AG04449 (cell line): ENCODE measurements at regions of chr6 and their contacts with region 1.

Region 1: DNA sequence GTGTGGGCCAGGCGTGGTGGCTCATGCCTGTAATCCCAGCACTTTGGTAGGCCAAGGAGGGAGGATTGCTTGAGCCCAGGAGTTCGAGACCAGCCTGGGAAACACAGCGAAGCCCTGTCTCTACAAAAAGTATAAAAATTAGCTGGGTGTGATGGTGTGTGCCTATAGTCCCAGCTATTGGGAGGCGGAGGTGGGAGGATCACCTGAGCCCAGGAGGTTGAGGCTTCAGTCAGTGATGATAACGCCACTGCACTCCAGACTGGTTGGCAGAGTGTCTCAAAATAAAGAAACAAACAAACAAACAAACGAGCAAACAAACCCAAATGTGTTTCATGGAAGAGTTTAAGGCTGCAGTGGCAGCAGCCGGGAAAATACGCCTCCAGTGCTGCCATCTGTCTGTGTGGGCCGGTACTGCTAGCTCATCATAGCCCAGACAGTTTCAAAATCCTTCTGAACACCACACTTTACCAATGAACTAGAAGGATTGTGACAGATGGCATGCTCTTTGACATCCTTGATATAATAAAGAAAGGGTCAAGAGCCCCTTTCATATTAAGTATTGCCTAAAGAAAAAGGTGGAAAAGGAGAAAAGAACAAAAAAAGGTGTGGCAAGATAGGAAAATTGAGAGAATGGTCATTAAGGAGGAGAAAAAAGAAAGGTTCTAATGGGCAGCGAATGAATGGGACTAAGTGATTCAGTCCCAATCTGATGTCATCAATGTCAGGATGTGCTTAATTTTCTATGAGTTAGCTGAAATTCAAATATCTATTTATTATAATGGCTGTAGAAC is 298.6 kb downstream of the SYNE1 start:
- DNase-seq: no peak
- H3K4me3 ChIP-seq: no peak overlapping the region
- CTCF ChIP-seq: peak; percentile 81

Region 2: DNA sequence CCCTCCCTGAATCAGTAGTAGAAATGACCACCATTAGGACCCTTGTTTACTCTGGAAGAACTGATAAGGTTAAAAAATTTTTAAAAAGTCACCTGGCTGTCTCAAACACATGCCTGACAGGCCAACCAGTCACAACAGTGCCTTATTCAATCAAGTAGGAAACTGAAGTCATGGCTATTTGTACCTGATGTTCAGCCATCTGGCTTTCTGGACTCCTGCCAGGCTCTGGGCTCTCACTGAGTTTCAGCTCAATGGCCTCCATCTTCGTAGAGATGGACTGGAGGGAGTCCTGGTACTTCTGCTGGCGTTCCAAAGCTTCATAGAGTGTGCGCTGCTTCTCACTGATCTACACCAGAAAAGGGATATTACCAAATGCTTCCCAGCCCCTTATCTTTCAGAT is 45.1 kb before region 1 on chr6:
- CTCF ChIA-PET with region 1: interaction called, 11 read pairs
- POLR2A ChIA-PET with region 1: no interaction called
- DNase-seq: no peak
- H3K4me3 ChIP-seq: no peak overlapping the region
- CTCF ChIP-seq: no peak

Region 3: DNA sequence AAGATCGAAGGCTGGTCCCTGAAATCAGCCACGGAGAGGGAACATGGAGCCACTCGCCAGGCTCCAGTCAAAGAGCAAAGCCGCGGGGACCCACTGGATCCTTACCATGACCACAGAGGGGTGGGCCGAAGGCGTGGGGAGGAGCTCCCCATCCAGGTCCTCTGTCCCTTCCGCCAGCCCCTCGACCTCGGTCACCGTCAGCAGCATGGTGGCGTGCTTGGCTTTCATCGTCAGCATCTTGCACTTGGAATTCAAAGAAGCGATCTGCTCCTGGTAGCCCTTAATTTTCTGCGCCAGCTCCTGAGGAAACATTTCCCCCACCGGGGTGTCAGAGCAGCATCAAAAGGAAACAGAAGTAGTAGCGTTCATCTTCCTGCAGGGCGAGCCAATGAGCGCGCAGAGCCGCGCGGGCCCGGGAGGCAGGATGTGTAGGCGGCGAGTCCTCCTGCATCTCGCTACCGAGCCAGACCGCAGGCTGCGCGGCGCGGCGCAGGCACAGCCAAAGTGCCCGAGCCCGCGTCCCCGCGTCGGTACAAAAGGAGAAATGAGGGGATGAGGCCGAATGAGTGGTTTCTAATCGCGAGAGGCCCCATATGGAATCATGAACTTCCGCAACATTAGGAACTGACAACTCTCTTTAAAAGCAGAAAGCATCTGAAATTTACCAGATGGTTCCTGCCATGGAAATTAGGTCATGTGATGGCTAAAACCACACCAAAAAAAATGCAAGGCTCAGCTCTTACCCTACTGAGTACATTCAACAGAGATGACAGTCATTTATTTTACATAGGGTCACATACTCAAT is 36.6 kb before region 1 on chr6:
- CTCF ChIA-PET with region 1: interaction called, 22 read pairs
- POLR2A ChIA-PET with region 1: no interaction called
- DNase-seq: no peak
- H3K4me3 ChIP-seq: peak overlapping the region; percentile 68
- CTCF ChIP-seq: peak; percentile 73

Region 4: GRCh38 chr6:152316024-152316423 is 22.5 kb before region 1 on chr6:
- CTCF ChIA-PET with region 1: interaction called, 52 read pairs
- POLR2A ChIA-PET with region 1: no interaction called
- DNase-seq: peak; percentile 72
- H3K4me3 ChIP-seq: no peak overlapping the region
- CTCF ChIP-seq: no peak

Region 5: GRCh38 chr6:152323376-152323775 is 15.2 kb before region 1 on chr6:
- CTCF ChIA-PET with region 1: interaction called, 52 read pairs
- POLR2A ChIA-PET with region 1: no interaction called
- DNase-seq: no peak
- H3K4me3 ChIP-seq: no peak overlapping the region
- CTCF ChIP-seq: no peak

Region 6: GRCh38 chr6:152351110-152351509 is 12.6 kb after region 1 on chr6:
- CTCF ChIA-PET with region 1: interaction called, 66 read pairs
- POLR2A ChIA-PET with region 1: interaction called, 3 read pairs
- DNase-seq: no peak
- H3K4me3 ChIP-seq: no peak overlapping the region
- CTCF ChIP-seq: no peak

Region 7: GRCh38 chr6:152368761-152369624 is 30.5 kb after region 1 on chr6:
- CTCF ChIA-PET with region 1: interaction called, 15 read pairs
- POLR2A ChIA-PET with region 1: no interaction called
- DNase-seq: no peak
- H3K4me3 ChIP-seq: no peak overlapping the region
- CTCF ChIP-seq: no peak